Spleen (tissue), 13 donors: ENCODE measurements at regions of chr16 and their contacts with region 1.

Region 1: DNA sequence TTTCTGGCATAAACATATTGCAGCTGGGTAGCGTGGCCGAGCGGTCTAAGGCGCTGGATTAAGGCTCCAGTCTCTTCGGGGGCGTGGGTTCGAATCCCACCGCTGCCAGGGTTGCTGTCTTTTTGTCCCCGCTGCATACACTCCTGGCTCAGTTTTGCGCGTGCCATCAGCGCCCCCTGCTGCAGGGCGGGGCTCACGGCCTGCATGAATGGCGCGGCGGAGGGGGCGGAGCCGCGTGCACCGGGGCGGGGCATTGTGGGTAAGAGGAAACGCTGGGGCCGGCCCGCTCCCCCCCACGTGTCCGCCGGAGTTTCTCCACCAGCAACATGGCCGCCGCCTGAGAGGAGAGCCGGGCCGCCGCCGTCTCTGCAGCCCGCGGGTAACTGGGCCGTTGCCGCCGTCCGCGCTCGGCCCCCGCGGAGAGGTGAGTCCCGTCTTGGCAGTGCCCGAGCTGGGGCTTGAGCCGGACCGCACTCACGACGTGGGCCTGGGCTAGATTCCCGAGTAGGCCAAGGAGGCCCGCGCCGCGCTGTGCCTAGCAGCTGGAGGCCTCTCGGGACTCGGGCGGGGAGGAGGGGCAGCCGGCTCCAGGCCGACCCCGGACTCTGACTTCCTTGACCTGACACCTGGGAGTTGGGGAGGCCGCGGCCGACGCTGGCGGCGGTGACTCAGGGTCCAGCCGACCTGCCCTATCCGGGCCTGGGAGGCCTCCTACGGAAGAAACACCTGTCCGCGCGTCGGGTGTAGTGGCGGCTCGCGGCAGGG is at the start of gene POLR3E:
- DNase-seq: peak; percentile 100
- H3K4me3 ChIP-seq: peak within 1 kb of the TSS; percentile 68 to 98 (median 93)
- H3K27ac ChIP-seq: peak within 1 kb of the TSS; percentile 78 to 93 (median 90)
- H3K4me1 ChIP-seq: peaks cover 12 to 54% (median 40%) of the 10 kb centered on the region in 6 donors
- H3K27me3 ChIP-seq: no peaks in the 10 kb centered on the region
- CTCF ChIP-seq: peak; percentile 97 to 100 (median 99)
- POLR2A ChIP-seq: peak in 1 of 3 donors; percentile 44
- total RNA-seq, gene POLR3E: 40.4 to 58.0 (median 52.2) TPM

Region 2: GRCh38 chr16:22206013-22206841 is 91.1 kb before region 1 on chr16 and contains the start of gene EEF2K:
- intact Hi-C with region 1: loop called (anchors 5 kb)
- DNase-seq: peak; percentile 96
- H3K4me3 ChIP-seq: peak within 1 kb of the TSS; percentile 71 to 100 (median 97)
- H3K27ac ChIP-seq: peak within 1 kb of the TSS; percentile 54 to 93 (median 87)
- H3K4me1 ChIP-seq: peaks cover 13 to 64% (median 35%) of the 10 kb centered on the region in 6 donors
- H3K27me3 ChIP-seq: no peaks in the 10 kb centered on the region
- CTCF ChIP-seq: peak; percentile 70 to 95 (median 93)
- POLR2A ChIP-seq: no peak
- total RNA-seq, gene EEF2K: 19.5 to 37.7 (median 27.5) TPM